ENCODE measurements at regions of chr6 and their contacts with region 1.

Region 1: GRCh38 chr6:41334482-41335040 is 847 bp upstream of the NCR2 start:
- DNase-seq: peak in 2 of 9 experiments; percentile 47 to 62
- ATAC-seq: no peak
- H3K4me3 ChIP-seq: no peak overlapping the region
- H3K4me3 Mint-ChIP-seq: peak overlapping the region; percentile 69
- H3K27ac ChIP-seq: peak overlapping the region; percentile 47 to 87
- H3K27ac Mint-ChIP-seq: peak overlapping the region; percentile 98
- H3K4me1 ChIP-seq: peaks cover 57% of the 10 kb centered on the region
- H3K4me1 Mint-ChIP-seq: peaks cover 64% of the 10 kb centered on the region
- H3K27me3 ChIP-seq: no peaks in the 10 kb centered on the region
- H3K27me3 Mint-ChIP-seq: no peaks in the 10 kb centered on the region
- CTCF ChIP-seq: no peak

Region 2: GRCh38 chr6:41298785-41299502 is 35.6 kb before region 1 on chr6:
- CTCF ChIA-PET with region 1: interaction called, 4 read pairs
- POLR2A ChIA-PET with region 1: interaction called, 3 read pairs
- intact Hi-C with region 1: loop called in 1 of 2 experiments (anchors 5 kb)
- DNase-seq: peak in 2 of 9 experiments; percentile 64 to 81
- ATAC-seq: peak; percentile 97
- H3K4me3 ChIP-seq: no peak overlapping the region
- H3K4me3 Mint-ChIP-seq: peak overlapping the region; percentile 49
- H3K27ac ChIP-seq: peak overlapping the region in 1 of 2 experiments; percentile 24
- H3K27ac Mint-ChIP-seq: peak overlapping the region; percentile 69
- H3K4me1 ChIP-seq: peaks cover 22% of the 10 kb centered on the region
- H3K4me1 Mint-ChIP-seq: peaks cover 46% of the 10 kb centered on the region
- H3K27me3 ChIP-seq: no peaks in the 10 kb centered on the region
- H3K27me3 Mint-ChIP-seq: no peaks in the 10 kb centered on the region
- CTCF ChIP-seq: no peak

Region 3: DNA sequence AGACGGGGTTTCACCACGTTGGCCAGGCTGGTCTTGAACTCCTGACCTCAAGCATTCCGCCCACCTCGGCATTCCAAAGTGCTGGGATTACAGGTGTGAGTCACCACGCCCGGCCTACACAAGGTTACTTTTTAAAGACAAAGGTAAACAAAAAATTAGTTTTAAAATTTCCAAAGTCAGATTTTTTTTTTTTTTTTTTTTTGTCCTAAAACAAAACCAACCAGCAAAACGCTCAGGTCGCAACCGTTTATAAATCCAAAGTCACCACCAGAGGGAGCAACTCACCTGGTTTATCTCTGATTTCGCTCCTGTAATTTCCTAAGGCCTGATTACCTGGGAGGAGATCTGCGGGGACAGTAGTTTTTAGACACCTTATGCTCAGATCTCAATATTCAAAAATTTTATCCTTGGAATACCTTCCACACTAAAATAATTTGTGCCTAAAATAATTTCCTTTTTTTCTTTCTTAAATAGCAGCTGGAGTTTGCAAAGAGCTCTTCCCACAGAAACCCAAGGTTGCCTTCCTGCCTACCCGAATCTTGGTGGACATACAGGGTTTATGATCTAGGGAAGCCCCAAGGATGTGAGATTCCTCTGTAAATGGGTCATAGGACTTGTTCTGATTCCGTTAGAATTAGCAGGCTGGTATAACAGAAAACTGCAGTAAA is 28.2 kb before region 1 on chr6:
- CTCF ChIA-PET with region 1: interaction called, 24 read pairs
- POLR2A ChIA-PET with region 1: interaction called, 3 read pairs
- intact Hi-C with region 1: no loop called
- DNase-seq: peak in 7 of 9 experiments; percentile 19 to 78 (median 34)
- ATAC-seq: no peak
- H3K4me3 ChIP-seq: no peak overlapping the region
- H3K4me3 Mint-ChIP-seq: no peak overlapping the region
- H3K27ac ChIP-seq: no peak overlapping the region
- H3K27ac Mint-ChIP-seq: no peak overlapping the region
- H3K4me1 ChIP-seq: peaks cover 4% of the 10 kb centered on the region
- H3K4me1 Mint-ChIP-seq: peaks cover 13% of the 10 kb centered on the region
- H3K27me3 ChIP-seq: no peaks in the 10 kb centered on the region
- H3K27me3 Mint-ChIP-seq: no peaks in the 10 kb centered on the region
- CTCF ChIP-seq: peak; percentile 79

Region 4: GRCh38 chr6:41344876-41345275 is 10.3 kb after region 1 on chr6:
- CTCF ChIA-PET with region 1: interaction called, 12 read pairs
- POLR2A ChIA-PET with region 1: interaction called, 21 read pairs
- intact Hi-C with region 1: no loop called
- DNase-seq: peak in 8 of 9 experiments; percentile 16 to 85 (median 48)
- ATAC-seq: peak; percentile 99
- H3K4me3 ChIP-seq: no peak overlapping the region
- H3K4me3 Mint-ChIP-seq: peak overlapping the region; percentile 37
- H3K27ac ChIP-seq: peak overlapping the region in 1 of 2 experiments; percentile 59
- H3K27ac Mint-ChIP-seq: peak overlapping the region; percentile 90
- H3K4me1 ChIP-seq: peaks cover 20% of the 10 kb centered on the region
- H3K4me1 Mint-ChIP-seq: peaks cover 28% of the 10 kb centered on the region
- H3K27me3 ChIP-seq: no peaks in the 10 kb centered on the region
- H3K27me3 Mint-ChIP-seq: peaks cover under 1% of the 10 kb centered on the region
- CTCF ChIP-seq: no peak

Region 5: DNA sequence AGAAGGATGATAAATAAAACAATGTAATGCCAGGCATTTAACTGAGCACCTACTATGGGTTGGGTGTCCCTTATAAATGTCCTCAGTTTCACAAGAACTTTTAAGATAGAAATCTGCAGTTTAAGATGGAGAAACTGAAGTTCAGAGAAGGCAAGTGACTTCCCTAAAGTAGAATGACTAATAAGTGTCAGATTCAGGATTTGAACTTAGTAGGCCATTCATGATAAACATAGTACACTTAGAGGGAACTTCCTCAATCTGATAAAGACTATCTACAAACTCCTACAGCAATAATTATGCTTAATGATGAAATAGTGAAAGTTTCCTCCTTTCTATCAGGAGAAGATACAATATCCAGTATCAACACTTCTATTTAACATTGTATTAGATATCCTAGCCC is 44.7 kb after region 1 on chr6:
- CTCF ChIA-PET with region 1: no interaction called
- POLR2A ChIA-PET with region 1: no interaction called
- intact Hi-C with region 1: no loop called
- DNase-seq: no peak
- ATAC-seq: no peak
- H3K4me3 ChIP-seq: no peak overlapping the region
- H3K4me3 Mint-ChIP-seq: no peak overlapping the region
- H3K27ac ChIP-seq: no peak overlapping the region
- H3K27ac Mint-ChIP-seq: no peak overlapping the region
- H3K4me1 ChIP-seq: peaks cover 11% of the 10 kb centered on the region
- H3K4me1 Mint-ChIP-seq: peaks cover 12% of the 10 kb centered on the region
- H3K27me3 ChIP-seq: peaks cover 13 to 15% of the 10 kb centered on the region in 2 experiments
- H3K27me3 Mint-ChIP-seq: peaks cover 50% of the 10 kb centered on the region
- CTCF ChIP-seq: no peak